ENCODE measurements at regions of chr14 and their contacts with region 1.

Region 1: DNA sequence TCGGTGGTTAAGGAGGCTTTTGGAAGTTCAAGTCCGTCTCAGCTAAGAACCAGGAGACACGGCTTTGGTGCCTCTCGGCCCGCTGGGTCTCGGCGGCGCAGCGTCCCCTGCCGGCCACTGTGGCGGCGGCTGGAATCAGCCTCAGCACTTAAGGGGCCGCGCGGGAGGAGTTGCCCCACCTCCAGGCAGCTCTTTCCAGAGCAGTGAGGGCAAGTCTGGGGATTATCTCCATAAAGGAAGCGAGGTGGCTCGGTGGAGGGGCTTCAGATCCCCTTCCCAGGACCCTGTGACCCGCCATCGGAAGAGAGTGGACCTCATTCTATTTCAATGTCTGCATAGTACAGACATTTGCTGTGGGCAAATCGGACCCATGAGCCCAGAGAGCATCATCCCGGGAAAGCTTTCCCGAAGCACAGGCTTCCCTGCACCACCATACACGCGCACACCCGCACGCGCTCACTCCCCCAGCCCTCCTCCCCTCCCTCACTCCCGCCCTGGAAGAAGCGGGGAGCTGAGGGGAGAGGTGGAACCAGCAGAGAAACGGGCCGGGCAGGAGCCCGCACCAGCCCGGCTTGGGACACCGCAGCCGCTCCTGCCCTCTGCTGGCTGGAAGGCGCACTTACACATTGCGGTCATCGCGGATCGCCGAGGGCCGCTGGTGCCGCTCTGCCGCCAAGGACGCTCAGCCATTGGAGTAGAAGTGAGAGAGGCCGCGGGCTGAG is 15.9 kb downstream of the RNASE2 start:
- DNase-seq: peak; percentile 65
- ATAC-seq: peak; percentile 91
- H3K4me3 ChIP-seq: peak overlapping the region; percentile 61 to 63
- H3K27ac ChIP-seq: peak overlapping the region; percentile 39
- H3K4me1 ChIP-seq: peaks cover 10 to 30% of the 10 kb centered on the region in 2 experiments
- H3K27me3 ChIP-seq: no peaks in the 10 kb centered on the region
- CTCF ChIP-seq: peak; percentile 74 to 98 (median 95)
- POLR2A ChIP-seq: no peak
- RAD21 ChIP-seq: peak; percentile 56

Region 2: DNA sequence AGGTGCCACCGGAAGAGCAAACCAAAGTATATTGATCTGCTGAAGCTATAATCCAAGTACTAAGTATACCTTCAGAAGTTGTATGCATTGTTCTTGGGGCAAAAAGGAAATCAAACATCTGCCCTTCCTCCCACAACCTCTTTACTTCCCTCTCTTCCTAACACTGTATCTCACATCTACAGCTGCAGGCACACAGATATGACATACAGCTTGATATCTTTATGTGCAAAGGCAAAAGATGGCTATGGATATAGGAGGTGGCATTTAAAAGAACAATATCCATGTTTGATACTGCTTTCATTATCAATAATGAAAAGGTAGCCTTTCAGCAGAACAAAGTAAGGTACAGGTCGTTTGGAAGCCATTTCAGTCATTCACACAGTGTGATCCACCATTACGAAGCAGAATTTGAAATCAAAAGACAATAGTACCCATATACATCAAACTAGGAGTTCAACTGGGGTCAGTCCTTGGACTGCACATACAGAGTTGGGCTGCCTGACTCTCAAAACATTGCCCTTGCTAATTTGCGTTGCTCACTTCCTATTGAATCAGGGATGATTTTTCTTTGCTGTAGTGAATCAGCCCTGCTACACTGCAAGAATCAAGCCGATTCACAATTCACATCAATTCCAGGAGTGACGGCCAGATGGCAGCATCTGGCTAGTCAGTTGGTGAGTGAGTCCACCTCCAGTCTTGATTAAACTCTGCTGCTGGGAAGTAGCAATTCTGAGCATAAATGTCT is 273.7 kb before region 1 on chr14:
- CTCF ChIA-PET with region 1: interaction called, 11 read pairs
- POLR2A ChIA-PET with region 1: no interaction called
- RAD21 ChIA-PET with region 1: no interaction called
- intact Hi-C with region 1: loop called (anchors 2 kb)
- DNase-seq: peak; percentile 55
- ATAC-seq: peak; percentile 98
- H3K4me3 ChIP-seq: no peak overlapping the region
- H3K27ac ChIP-seq: no peak overlapping the region
- H3K4me1 ChIP-seq: peaks cover 0 to 3% of the 10 kb centered on the region in 2 experiments; a peak in 1 of 4 replicates
- H3K27me3 ChIP-seq: no peaks in the 10 kb centered on the region
- CTCF ChIP-seq: peak; percentile 78 to 85 (median 80)
- POLR2A ChIP-seq: no peak
- RAD21 ChIP-seq: peak; percentile 81

Region 3: DNA sequence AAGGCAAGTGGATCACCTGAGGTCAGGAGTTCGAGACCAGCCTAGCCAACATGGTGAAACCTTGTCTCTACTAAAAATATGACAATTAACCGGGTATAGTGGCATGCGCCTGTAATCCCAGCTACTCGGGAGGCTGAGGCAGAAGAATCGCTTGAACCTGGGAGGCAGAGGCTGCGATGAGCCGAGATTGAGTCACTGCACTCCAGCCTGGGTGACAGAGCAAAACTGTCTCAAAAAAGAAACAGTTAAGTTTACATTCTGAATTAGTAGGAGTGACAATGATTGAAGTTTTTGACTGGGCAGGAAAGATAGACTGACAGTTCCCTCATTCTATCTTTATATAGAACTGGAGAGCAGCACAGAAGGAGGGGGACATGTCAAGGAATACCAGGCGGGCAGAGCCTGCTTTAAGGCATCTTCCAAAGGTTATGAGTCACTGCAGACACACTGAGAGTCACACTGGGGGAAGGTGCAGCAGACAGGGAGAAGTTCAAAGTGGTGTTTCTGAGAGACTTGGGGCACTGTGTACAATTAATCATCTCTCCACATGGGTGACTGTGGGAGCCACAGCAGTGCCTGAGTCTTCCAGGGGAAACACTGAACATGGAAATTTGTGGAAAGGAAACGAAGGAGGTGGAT is 122.7 kb before region 1 on chr14:
- CTCF ChIA-PET with region 1: interaction called, 12 read pairs
- POLR2A ChIA-PET with region 1: no interaction called
- RAD21 ChIA-PET with region 1: no interaction called
- intact Hi-C with region 1: no loop called
- DNase-seq: peak; percentile 32
- ATAC-seq: peak; percentile 98
- H3K4me3 ChIP-seq: peak overlapping the region; percentile 6 to 33; a peak in 2 of 4 replicates
- H3K27ac ChIP-seq: peak overlapping the region; percentile 36; the same call in 1 of the 2 replicates
- H3K4me1 ChIP-seq: peaks cover 17 to 20% of the 10 kb centered on the region in 2 experiments
- H3K27me3 ChIP-seq: no peaks in the 10 kb centered on the region
- CTCF ChIP-seq: no peak
- POLR2A ChIP-seq: no peak
- RAD21 ChIP-seq: no peak

Region 4: GRCh38 chr14:20866963-20867362 is 104.2 kb before region 1 on chr14:
- CTCF ChIA-PET with region 1: interaction called, 14 read pairs
- POLR2A ChIA-PET with region 1: no interaction called
- RAD21 ChIA-PET with region 1: no interaction called
- intact Hi-C with region 1: no loop called
- DNase-seq: peak; percentile 16
- ATAC-seq: peak; percentile 72
- H3K4me3 ChIP-seq: no peak overlapping the region
- H3K27ac ChIP-seq: no peak overlapping the region
- H3K4me1 ChIP-seq: no peaks in the 10 kb centered on the region
- H3K27me3 ChIP-seq: no peaks in the 10 kb centered on the region
- CTCF ChIP-seq: peak; percentile 48 to 69 (median 67); a peak in 5 of 6 replicates
- POLR2A ChIP-seq: no peak
- RAD21 ChIP-seq: peak; percentile 44

Region 5: GRCh38 chr14:20956376-20956976 is 14.7 kb before region 1 on chr14:
- CTCF ChIA-PET with region 1: interaction called, 53 read pairs
- POLR2A ChIA-PET with region 1: interaction called, 9 read pairs
- RAD21 ChIA-PET with region 1: no interaction called
- intact Hi-C with region 1: no loop called
- DNase-seq: no peak
- ATAC-seq: no peak
- H3K4me3 ChIP-seq: no peak overlapping the region
- H3K27ac ChIP-seq: no peak overlapping the region
- H3K4me1 ChIP-seq: peaks cover 3 to 7% of the 10 kb centered on the region in 2 experiments; a peak in 2 of 4 replicates
- H3K27me3 ChIP-seq: peaks cover 19% of the 10 kb centered on the region
- CTCF ChIP-seq: no peak
- POLR2A ChIP-seq: no peak
- RAD21 ChIP-seq: no peak

Region 6: DNA sequence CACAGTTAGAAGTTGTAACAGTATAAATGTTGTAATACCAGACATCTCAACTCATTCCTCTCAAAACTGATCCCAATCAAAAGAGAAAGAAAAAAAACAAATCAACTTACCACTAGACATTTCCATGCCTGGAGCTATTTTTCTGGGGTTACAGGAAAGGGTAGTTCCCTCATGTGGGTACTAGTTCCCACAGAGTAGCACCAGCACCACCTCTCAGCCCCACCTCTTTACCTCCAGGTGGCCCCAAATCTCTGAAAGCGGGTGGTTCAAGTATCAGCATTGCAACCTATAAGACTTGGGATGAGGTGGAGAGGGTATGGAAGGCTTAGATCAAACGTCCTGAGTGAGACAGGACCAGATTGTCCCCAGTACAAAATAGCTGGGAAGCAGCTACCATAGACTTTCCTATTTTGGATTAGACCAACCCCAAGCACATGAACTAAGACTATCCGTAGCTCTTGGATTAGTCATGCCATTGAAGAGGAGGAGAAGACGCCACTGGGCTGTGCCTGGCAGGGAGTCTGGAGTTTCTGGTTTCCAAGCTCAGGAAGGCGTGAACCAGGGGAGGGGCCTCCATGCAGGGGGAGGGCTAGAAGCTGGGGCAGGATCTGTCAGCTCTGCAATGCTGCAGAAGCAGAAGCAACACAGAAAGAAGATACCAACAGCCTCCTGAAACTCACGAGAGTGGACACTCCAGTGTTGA is 27.7 kb after region 1 on chr14 and contains the start of gene SLC39A2:
- CTCF ChIA-PET with region 1: interaction called, 15 read pairs
- POLR2A ChIA-PET with region 1: interaction called, 4 read pairs
- RAD21 ChIA-PET with region 1: no interaction called
- intact Hi-C with region 1: no loop called
- DNase-seq: peak; percentile 33
- ATAC-seq: peak; percentile 96
- H3K4me3 ChIP-seq: 0 out of 4 replicates have a peak within 1 kb of the TSS, but pooled peaks of 1 of the 2 experiments have one; percentile 7
- H3K27ac ChIP-seq: no peak within 1 kb of the TSS
- H3K4me1 ChIP-seq: peaks cover 7 to 13% of the 10 kb centered on the region in 2 experiments; a peak in 3 of 4 replicates
- H3K27me3 ChIP-seq: no peaks in the 10 kb centered on the region
- CTCF ChIP-seq: no peak
- POLR2A ChIP-seq: no peak
- RAD21 ChIP-seq: no peak
- total RNA-seq, gene SLC39A2: not detected

Region 7: GRCh38 chr14:21269252-21270046 is 298.3 kb after region 1 on chr14 and contains the start of gene HNRNPC:
- CTCF ChIA-PET with region 1: no interaction called
- POLR2A ChIA-PET with region 1: no interaction called
- RAD21 ChIA-PET with region 1: no interaction called
- intact Hi-C with region 1: no loop called
- DNase-seq: peak; percentile 100
- ATAC-seq: peak; percentile 93
- H3K4me3 ChIP-seq: peak within 1 kb of the TSS; percentile 91 to 98
- H3K27ac ChIP-seq: peak within 1 kb of the TSS; percentile 65
- H3K4me1 ChIP-seq: peaks cover 14 to 44% of the 10 kb centered on the region in 2 experiments
- H3K27me3 ChIP-seq: no peaks in the 10 kb centered on the region
- CTCF ChIP-seq: no peak
- POLR2A ChIP-seq: peak; percentile 88
- RAD21 ChIP-seq: no peak
- total RNA-seq, gene HNRNPC: 843 TPM

Measured in HCT116 (cell line).